OCI-LY7 (cell line): ENCODE measurements at regions of chr14 and their contacts with region 1.

Region 1: GRCh38 chr14:100056964-100057795 is 8.0 kb upstream of the EVL start:
- DNase-seq: peak; percentile 58
- H3K4me3 ChIP-seq: no peak overlapping the region
- H3K27ac ChIP-seq: no peak overlapping the region
- H3K4me1 ChIP-seq: peaks cover 11% of the 10 kb centered on the region
- CTCF ChIP-seq: peak; percentile 76

Region 2: DNA sequence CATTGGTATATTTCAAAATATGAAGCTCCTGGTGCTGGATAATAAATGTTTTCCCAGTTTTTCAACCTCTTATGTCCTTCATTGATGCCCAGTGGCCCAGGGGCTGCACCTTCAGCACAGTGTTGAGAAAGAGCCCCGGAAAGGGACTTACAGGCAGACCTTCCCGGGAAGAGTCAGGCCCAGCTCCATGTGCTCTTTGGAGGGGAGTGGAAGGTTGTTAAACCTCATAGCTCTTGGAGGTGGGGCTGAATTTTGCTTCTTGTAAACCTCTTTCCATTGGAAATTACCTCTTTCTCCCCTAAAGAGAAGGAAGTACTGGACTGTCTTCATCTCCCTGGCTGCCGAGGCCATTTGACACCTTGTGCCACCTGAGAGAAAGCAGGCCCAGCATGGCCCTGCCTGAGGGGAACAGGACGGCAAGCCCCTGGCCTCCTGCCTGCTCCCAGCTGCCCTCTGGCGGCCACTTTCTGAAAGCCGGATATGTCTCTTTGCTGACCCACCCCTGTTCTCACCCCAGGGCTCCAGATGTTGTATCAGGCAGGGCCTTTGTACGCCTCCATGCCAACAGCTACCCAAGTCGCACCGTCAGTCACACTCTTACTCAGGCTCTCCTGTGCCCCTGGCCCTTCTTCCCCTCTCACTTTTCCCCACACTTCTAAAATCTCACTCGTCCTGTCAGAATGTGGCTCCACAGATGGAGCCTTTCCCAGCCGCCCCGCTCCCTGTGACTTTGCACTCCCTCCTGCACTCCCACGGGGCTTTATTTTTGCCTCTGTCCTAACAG is 51.1 kb after region 1 on chr14:
- CTCF ChIA-PET with region 1: no interaction called
- POLR2A ChIA-PET with region 1: interaction called, 3 read pairs
- intact Hi-C with region 1: loop called (anchors 1 kb)
- DNase-seq: peak; percentile 73
- H3K4me3 ChIP-seq: no peak overlapping the region
- H3K27ac ChIP-seq: no peak overlapping the region
- H3K4me1 ChIP-seq: peaks cover 8% of the 10 kb centered on the region
- CTCF ChIP-seq: peak; percentile 89